Dorsolateral prefrontal cortex (tissue), 120 donors: ENCODE measurements at regions of chr17 and their contacts with region 1.

Region 1: DNA sequence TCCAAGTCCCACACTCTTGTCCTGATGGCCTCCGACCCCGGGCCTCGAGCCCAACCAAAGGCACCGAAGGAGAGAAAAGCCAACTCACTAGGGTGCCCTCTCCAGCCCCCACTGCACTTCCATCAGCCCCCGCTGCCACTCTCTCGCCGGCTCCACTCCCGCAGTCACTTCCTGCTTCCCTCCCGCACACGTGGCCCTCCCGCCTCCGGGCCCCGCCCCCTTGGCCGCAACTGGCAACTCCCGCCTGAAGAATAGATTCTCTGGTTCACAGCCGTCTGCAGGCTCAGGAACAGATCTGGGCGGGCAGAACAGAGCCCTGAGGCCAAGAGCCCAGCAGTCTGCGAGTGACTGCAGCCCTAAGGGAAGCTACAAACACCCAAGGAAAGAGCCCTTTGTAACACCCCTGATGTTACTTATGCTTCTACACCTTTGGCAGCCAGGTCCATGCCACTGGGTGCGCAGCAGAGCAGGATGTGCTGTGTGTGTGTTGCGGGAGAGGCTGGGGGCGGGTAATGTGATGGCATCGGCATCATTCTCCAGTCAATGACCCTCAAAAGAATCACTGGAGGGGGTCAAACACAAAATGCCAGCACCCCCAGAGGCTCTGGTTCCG is at the start of gene SLC39A11:
- DNase-seq: peak; percentile 94 to 97 (median 95)
- H3K4me3 ChIP-seq: peak within 1 kb of the TSS; percentile 48 to 88 (median 73)
- H3K27ac ChIP-seq: peak within 1 kb of the TSS; percentile 65 to 99 (median 96)
- H3K27me3 ChIP-seq: no peaks in the 10 kb centered on the region
- CTCF ChIP-seq: peak in 23 of 56 donors; percentile 4 to 43 (median 25)
- total RNA-seq, gene SLC39A11: 14.9 to 129 (median 47.9) TPM

Region 2: DNA sequence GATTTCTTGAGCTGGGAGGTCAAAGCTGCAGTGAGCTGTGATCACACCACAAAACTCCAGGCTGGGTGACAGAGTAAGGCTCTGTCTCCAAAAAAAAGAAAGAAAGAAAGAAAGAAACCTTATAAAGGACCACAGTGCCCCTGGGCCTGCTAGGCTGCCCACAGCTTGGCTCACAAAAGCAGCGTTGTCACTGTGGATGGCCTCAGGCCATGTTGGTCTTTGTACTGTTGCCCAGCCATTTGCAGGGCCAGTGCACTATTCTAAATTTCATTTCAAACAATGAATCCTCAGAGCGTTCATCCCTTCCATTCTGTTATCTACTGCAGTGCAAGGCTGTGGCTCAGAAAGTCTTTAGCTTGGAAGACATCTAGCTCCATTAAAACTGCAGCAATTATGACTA is 208.6 kb before region 1 on chr17:
- intact Hi-C with region 1: loop called in 1 of 2 experiments (anchors 10 kb)
- DNase-seq: peak; percentile 21 to 92 (median 80)
- H3K4me3 ChIP-seq: peak overlapping the region in 1 of 59 donors; percentile 17
- H3K27ac ChIP-seq: peak overlapping the region in 58 of 59 donors; percentile 1 to 95 (median 86)
- H3K27me3 ChIP-seq: no peaks in the 10 kb centered on the region
- CTCF ChIP-seq: peak in 20 of 56 donors; percentile 5 to 57 (median 17)

Region 3: DNA sequence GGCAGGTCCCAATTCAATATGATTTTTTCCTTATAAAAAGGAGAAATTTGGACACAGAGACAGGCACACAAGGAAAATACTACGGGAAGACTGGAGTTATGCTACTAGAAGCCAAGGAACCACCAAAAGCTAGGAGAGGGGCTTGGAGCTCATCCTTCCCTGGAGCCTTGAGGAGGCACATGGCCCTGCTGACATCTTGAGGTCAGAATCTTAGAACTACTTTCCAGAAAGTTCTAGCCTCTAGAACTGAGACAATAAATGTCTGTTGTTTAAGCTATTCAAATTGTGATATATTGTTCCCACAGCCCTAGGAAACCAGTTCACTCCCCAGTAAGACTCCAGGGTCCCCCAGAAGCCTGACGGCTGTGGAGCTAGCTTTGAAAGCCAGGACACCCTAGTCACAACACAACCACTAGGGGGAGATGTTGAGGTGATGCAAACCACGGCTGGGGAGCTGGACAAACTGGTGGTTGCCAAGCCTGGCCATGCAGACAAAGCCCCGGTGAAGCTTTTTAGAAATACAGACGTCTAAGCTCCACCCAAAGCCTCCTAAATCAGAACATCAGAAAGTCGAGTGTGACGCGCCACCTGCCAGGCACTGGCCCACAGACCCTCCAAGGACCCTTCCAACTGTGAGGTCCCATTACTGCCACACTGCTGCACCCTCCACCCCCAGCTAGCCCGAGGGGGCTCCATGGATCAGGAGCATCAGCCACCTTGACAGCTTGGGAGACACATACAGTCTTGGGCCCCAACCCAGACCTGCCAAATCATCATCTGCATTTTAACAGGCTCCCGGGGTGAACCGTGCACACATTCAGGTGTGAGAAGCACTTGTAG is 106.5 kb before region 1 on chr17:
- intact Hi-C with region 1: loop called (anchors 1 to 2 kb)
- DNase-seq: peak; percentile 45 to 85 (median 74)
- H3K4me3 ChIP-seq: no peak overlapping the region
- H3K27ac ChIP-seq: peak overlapping the region in 25 of 59 donors; percentile 0 to 88 (median 53)
- H3K27me3 ChIP-seq: no peaks in the 10 kb centered on the region
- CTCF ChIP-seq: peak; percentile 65 to 95 (median 86)

Region 4: GRCh38 chr17:73043686-73044581 is 48.7 kb before region 1 on chr17:
- intact Hi-C with region 1: loop called in 1 of 2 experiments (anchors 2 kb)
- DNase-seq: no peak
- H3K4me3 ChIP-seq: peak overlapping the region in 7 of 59 donors; percentile 1 to 40 (median 16)
- H3K27ac ChIP-seq: peak overlapping the region in 44 of 59 donors; percentile 0 to 79 (median 50)
- H3K27me3 ChIP-seq: no peaks in the 10 kb centered on the region
- CTCF ChIP-seq: no peak

Region 5: GRCh38 chr17:73156166-73156840 is 63.7 kb after region 1 on chr17:
- intact Hi-C with region 1: loop called (anchors 1 to 10 kb)
- DNase-seq: peak; percentile 71 to 82 (median 76)
- H3K4me3 ChIP-seq: peak overlapping the region in 9 of 59 donors; percentile 6 to 41 (median 26)
- H3K27ac ChIP-seq: peak overlapping the region in 47 of 59 donors; percentile 1 to 83 (median 55)
- H3K27me3 ChIP-seq: no peaks in the 10 kb centered on the region
- CTCF ChIP-seq: peak; percentile 38 to 90 (median 81)

Region 6: GRCh38 chr17:73192894-73193701 is 100.5 kb after region 1 on chr17 and contains the start of gene COG1:
- intact Hi-C with region 1: loop called in 1 of 2 experiments (anchors 5 kb)
- DNase-seq: peak; percentile 51 to 85 (median 74)
- H3K4me3 ChIP-seq: peak within 1 kb of the TSS; percentile 73 to 100 (median 95)
- H3K27ac ChIP-seq: peak within 1 kb of the TSS; percentile 47 to 94 (median 86)
- H3K27me3 ChIP-seq: no peaks in the 10 kb centered on the region
- CTCF ChIP-seq: peak in 6 of 56 donors; percentile 3 to 39 (median 11)
- total RNA-seq, gene COG1: 48.4 to 137 (median 85.4) TPM